Activated CD4-positive, alpha-beta T cell treated with anti-CD3 and anti-CD28 coated beads, Interleukin-2, amount 10 ng/mL, durations not matched to agents 24 days and 14 days (primary cell): ENCODE measurements at regions of chr10 and their contacts with region 1.

Region 1: GRCh38 chr10:17669185-17669872 is 25.4 kb downstream of the STAM start:
- DNase-seq: no peak
- H3K4me3 Mint-ChIP-seq: peak overlapping the region; percentile 70
- H3K27ac Mint-ChIP-seq: peak overlapping the region; percentile 86
- H3K4me1 Mint-ChIP-seq: peaks cover 38% of the 10 kb centered on the region
- H3K27me3 Mint-ChIP-seq: no peaks in the 10 kb centered on the region

Region 2: DNA sequence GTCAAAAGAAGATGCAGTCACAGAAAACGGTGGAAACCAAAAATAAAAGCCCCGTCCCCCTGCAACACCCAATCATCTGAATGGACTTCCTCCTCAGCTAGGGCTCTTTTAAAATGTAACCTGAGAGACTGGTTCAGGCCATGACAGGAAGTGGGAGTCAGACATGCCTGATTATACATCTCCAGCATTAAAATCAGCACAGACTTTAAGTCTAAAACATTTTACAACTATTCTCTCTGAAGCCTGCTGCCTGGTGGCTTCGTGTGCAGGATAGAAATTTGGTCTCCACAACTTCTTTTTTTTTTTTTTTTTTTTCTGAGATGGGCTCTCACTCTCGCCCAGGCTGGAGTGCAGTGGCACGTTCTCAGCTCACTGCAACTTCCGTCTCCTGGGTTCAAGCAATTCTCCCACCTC is 82.5 kb before region 1 on chr10:
- intact Hi-C with region 1: no loop called
- DNase-seq: no peak
- H3K4me3 Mint-ChIP-seq: peak overlapping the region; percentile 24
- H3K27ac Mint-ChIP-seq: no peak overlapping the region
- H3K4me1 Mint-ChIP-seq: peaks cover 11% of the 10 kb centered on the region
- H3K27me3 Mint-ChIP-seq: peaks cover 6% of the 10 kb centered on the region

Region 3: GRCh38 chr10:17640331-17640816 is 29.0 kb before region 1 on chr10:
- intact Hi-C with region 1: no loop called
- DNase-seq: no peak
- H3K4me3 Mint-ChIP-seq: no peak overlapping the region
- H3K27ac Mint-ChIP-seq: no peak overlapping the region
- H3K4me1 Mint-ChIP-seq: peaks cover 14% of the 10 kb centered on the region
- H3K27me3 Mint-ChIP-seq: peaks cover 5% of the 10 kb centered on the region

Region 4: DNA sequence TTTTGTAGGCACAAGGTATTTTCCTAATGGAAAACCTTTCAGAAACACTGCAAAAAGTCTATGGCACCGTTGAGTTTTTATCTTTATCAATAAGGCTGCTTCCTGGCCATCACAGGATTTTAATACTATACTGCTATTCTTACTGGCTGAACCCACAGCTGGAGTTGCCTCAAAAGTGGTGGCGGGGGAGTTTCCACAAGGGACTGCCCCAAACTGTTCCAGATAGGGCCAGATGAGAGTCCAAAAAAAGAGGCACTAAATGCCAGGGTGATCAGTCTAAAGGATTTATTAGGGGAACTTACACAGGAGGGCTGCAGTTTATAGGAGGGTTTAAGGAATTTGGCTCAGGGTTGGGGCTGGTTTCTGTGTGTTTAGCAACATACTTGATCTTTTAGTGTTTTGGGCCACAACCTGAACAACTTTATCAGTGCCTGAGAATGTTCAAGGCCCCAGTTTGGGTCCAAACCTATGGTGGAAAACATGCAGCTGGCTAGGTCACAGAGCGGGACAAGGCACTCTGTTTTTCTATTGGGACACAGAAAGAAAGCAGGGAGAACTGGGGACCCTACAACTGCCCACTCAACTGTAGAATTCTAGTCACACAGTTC is 16.0 kb after region 1 on chr10:
- intact Hi-C with region 1: loop called (anchors 2 kb)
- DNase-seq: no peak
- H3K4me3 Mint-ChIP-seq: no peak overlapping the region
- H3K27ac Mint-ChIP-seq: peak overlapping the region; percentile 26
- H3K4me1 Mint-ChIP-seq: peaks cover 29% of the 10 kb centered on the region
- H3K27me3 Mint-ChIP-seq: no peaks in the 10 kb centered on the region

Region 5: DNA sequence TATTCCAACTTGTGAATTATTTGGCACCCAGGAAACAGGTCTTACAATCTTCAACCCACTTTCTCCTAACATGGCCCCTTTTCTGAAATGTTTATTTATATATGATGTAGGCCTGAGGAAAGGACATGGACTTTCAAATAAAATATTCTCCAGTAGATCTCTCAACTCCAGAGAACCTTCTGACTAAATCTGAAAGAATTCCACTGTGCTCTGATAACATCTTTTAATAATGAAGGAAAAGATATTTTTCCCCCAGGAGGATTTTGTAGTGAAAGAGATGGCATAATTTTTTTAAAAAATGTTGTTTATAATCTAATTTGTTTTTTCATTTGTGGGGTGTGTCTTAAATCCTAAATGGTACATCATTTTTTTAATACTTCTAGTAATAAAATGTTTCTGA is 1551.5 kb after region 1 on chr10:
- intact Hi-C with region 1: no loop called
- DNase-seq: no peak
- H3K4me3 Mint-ChIP-seq: no peak overlapping the region
- H3K27ac Mint-ChIP-seq: no peak overlapping the region
- H3K4me1 Mint-ChIP-seq: no peaks in the 10 kb centered on the region
- H3K27me3 Mint-ChIP-seq: no peaks in the 10 kb centered on the region